ENCODE measurements at regions of chr1 and their contacts with region 1.

Region 1: DNA sequence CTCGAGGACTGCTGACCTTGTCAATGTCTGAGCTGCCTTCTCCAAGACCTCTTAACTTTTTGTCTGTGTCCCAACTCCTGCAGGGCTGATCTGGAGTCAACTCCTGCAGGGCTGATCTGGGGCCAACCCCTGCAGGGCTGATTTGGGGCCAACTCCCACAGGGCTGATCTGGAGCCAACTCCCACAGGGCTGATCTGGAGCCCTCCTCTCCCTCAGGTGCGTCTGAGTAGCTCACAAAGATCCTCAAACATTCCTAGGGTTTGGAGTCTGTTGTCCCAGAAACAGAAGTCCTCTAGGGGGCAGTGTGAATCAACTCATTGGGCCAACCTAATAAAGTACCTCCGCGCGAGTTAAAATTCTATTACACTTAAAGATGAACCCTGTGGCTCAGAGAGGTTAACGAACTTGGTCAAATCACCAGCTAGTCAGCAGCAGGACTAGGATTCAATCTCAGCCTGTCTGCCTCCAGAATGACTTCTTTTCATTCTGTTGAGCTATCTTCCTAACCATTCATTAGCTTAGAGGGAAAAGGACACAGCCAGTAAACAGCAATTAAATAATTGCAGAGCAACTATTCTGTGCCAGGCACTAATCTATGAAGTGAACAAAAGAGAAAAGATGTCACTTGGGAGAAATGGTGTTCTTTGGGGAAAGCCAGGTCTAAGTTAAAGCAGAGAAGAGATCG is 17.2 kb upstream of the RLF start:
- DNase-seq: peak; percentile 71
- H3K4me3 ChIP-seq: no peak overlapping the region
- H3K27ac ChIP-seq: no peak overlapping the region
- H3K4me1 ChIP-seq: peaks cover 7% of the 10 kb centered on the region
- H3K27me3 ChIP-seq: no peaks in the 10 kb centered on the region
- CTCF ChIP-seq: peak; percentile 40 to 73 (median 72)
- POLR2A ChIP-seq: no peak

Region 2: GRCh38 chr1:39995973-39996393 is 148.1 kb before region 1 on chr1:
- intact Hi-C with region 1: no loop called
- DNase-seq: no peak
- H3K4me3 ChIP-seq: no peak overlapping the region
- H3K27ac ChIP-seq: no peak overlapping the region
- H3K4me1 ChIP-seq: no peaks in the 10 kb centered on the region
- H3K27me3 ChIP-seq: no peaks in the 10 kb centered on the region
- CTCF ChIP-seq: no peak
- POLR2A ChIP-seq: no peak

Region 3: DNA sequence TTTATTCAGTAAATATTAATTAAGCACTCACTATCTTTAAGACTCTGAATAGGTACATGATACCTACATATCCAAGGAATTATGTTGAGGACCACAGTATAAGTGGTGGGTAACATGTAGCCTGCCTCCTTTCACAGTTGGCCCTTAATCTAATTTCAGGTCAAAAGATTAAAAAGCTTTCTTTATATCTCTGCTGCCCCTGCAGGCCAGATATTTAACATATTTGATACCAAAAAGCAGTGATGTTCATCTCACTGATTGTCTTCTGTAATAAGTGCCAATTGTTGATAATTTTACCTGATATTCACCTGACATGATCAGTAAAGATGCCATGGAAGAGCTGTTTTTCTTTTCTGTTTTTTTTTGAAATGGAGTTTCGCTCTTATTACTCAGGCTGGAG is 53.6 kb after region 1 on chr1:
- intact Hi-C with region 1: no loop called
- DNase-seq: no peak
- H3K4me3 ChIP-seq: no peak overlapping the region
- H3K27ac ChIP-seq: no peak overlapping the region
- H3K4me1 ChIP-seq: no peaks in the 10 kb centered on the region
- H3K27me3 ChIP-seq: no peaks in the 10 kb centered on the region
- CTCF ChIP-seq: peak in 1 of 4 experiments; percentile 12
- POLR2A ChIP-seq: no peak

Region 4: GRCh38 chr1:40315239-40315794 is 171.3 kb after region 1 on chr1:
- intact Hi-C with region 1: loop called (anchors 10 kb)
- DNase-seq: peak; percentile 80
- H3K4me3 ChIP-seq: peak overlapping the region; percentile 28 to 37
- H3K27ac ChIP-seq: peak overlapping the region; percentile 30 to 56
- H3K4me1 ChIP-seq: no peaks in the 10 kb centered on the region
- H3K27me3 ChIP-seq: no peaks in the 10 kb centered on the region
- CTCF ChIP-seq: peak; percentile 89 to 95 (median 94)
- POLR2A ChIP-seq: no peak

Measured in prostate gland (tissue), 2 donors.